HepG2 (cell line): ENCODE measurements at regions of chr10 and their contacts with region 1.

Region 1: DNA sequence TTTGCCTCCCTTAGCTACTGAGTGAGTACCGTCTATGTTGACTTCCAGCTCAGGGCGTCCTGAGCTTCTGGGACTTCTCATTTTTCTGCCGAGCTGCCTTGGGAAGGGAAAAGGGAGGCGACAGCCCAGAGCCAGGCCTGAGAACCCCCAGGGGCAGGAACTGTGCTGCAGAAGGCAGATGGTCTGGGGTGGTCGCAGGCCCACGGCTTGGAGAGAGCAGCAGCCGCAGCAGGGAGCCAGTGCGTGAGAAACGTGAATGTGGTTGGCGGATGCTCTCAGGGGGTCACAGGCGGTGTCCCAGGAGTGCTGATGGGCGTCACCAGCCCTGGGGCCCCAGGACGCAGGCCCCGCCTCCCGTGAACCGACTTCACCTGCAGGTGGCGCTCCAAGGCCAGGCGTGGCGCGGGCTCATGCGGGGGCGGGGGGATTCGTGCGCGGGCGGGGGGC is 9.2 kb upstream of the PWWP2B start:
- DNase-seq: peak; percentile 29
- ATAC-seq: peak; percentile 22
- H3K4me3 ChIP-seq: peak overlapping the region in 1 of 3 experiments; percentile 48; a peak in 1 of 6 replicates
- H3K27ac ChIP-seq: no peak overlapping the region
- H3K4me1 ChIP-seq: peaks cover 61% of the 10 kb centered on the region
- H3K27me3 ChIP-seq: peaks cover 3 to 33% of the 10 kb centered on the region in 2 experiments; a peak in 2 of 5 replicates
- CTCF ChIP-seq: peak; percentile 89
- EP300 ChIP-seq: no peak
- POLR2A ChIP-seq: no peak
- RAD21 ChIP-seq: peak; percentile 69

Region 2: DNA sequence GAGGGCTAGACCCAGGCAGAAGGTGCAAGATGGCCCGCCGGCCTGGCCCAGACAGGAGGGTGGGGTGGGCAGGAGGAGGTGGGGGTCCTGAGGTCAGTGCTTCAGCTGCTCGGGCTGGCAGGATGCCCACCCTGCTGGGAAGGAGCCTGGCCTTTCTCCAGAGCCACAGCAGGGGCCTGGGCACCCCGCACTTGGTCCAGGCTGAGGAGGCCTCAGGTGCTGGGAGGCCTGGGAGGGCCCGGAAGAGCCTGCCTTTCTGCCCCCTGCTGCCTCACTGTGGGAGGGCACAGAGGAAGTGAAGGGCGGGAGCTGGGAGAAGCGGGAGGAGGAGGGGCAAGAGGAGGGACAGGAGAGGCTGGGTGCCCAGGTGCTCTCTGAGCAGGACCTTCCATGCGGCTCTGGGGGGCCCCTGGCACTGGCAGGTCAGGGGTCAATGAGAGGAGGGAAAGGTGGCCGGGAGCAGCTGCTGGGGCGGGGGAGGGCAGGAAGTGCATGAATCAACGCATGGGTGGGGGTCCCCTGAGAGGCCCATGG is 58.9 kb after region 1 on chr10:
- CTCF ChIA-PET with region 1: interaction called, 5 read pairs
- POLR2A ChIA-PET with region 1: interaction called, 5 read pairs
- in situ Hi-C with region 1: loop called (anchors 5 kb)
- intact Hi-C with region 1: loop called (anchors 2 kb)
- DNase-seq: peak; percentile 83
- ATAC-seq: peak; percentile 83
- H3K4me3 ChIP-seq: peak overlapping the region; percentile 11 to 59 (median 43); a peak in 5 of 6 replicates
- H3K27ac ChIP-seq: peak overlapping the region; percentile 57
- H3K4me1 ChIP-seq: peaks cover 52% of the 10 kb centered on the region
- H3K27me3 ChIP-seq: no peaks in the 10 kb centered on the region; a peak in 1 of 5 replicates
- CTCF ChIP-seq: peak; percentile 90
- EP300 ChIP-seq: 0 out of 4 replicates have a peak, but pooled peaks of 1 of the 2 experiments have one; percentile 22
- POLR2A ChIP-seq: no peak
- RAD21 ChIP-seq: peak; percentile 80

Region 3: DNA sequence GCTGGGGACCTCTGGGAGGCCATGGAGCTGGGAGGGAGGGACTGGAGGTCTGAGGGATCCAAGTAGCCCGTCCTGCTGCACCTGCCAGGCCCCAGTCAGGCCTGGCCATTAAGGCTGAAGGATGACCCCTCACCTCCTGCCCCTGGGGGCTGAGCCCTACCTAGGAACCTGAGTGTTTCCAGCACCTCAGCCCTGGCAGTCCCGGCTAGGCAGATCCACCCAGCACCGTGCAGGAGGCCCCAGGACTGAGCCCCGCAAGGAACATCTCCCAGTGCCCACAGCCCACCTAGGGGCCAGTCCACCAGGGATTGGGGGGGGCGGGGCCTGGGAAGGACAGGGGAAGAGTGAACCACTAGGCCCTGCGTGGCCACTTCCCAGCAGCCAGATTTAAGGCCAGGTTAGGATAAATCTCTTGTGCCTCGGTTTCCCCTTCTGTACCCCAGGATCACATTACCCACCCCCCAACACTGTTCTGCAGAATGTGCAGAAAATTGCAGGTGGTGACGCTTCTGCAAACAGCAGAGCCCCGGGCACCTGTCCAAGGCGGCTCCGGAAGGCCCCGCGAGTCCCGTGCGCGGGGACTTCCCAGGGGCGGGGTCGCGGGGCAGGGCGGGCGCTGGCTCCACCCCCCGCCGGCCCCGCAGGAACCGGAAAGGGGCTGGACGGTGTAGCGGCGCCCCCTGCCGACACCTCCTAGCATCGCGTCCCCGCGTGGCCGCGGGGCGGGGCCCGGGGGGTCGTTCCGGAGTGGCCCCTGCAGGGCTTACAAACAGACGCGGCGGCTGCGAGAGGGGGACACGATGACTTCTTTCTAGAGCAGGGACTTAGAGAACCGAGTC is 65.1 kb after region 1 on chr10:
- CTCF ChIA-PET with region 1: interaction called, 13 read pairs
- POLR2A ChIA-PET with region 1: no interaction called
- in situ Hi-C with region 1: loop called (anchors 5 kb)
- intact Hi-C with region 1: no loop called
- DNase-seq: peak; percentile 49
- ATAC-seq: peak; percentile 57
- H3K4me3 ChIP-seq: peak overlapping the region; percentile 36 to 51 (median 41); a peak in 5 of 6 replicates
- H3K27ac ChIP-seq: no peak overlapping the region
- H3K4me1 ChIP-seq: peaks cover 72% of the 10 kb centered on the region
- H3K27me3 ChIP-seq: peaks cover 0 to 3% of the 10 kb centered on the region in 2 experiments; a peak in 1 of 5 replicates
- CTCF ChIP-seq: peak; percentile 88
- EP300 ChIP-seq: 0 out of 4 replicates have a peak, but pooled peaks of 1 of the 2 experiments have one; percentile 20
- POLR2A ChIP-seq: no peak
- RAD21 ChIP-seq: peak; percentile 94